Naive thymus-derived CD8-positive, alpha-beta T cell (primary cell): ENCODE measurements at regions of chr1 and their contacts with region 1.

Region 1: GRCh38 chr1:209769171-209769904 is 13.5 kb downstream of the TRAF3IP3 start:
- DNase-seq: peak; percentile 31 to 88 (median 74)
- ATAC-seq: peak; percentile 68 to 78
- H3K4me3 Mint-ChIP-seq: no peak overlapping the region
- H3K27ac Mint-ChIP-seq: no peak overlapping the region
- H3K4me1 Mint-ChIP-seq: peaks cover 22 to 44% (median 36%) of the 10 kb centered on the region in 4 donors
- H3K27me3 Mint-ChIP-seq: no peaks in the 10 kb centered on the region

Region 2: DNA sequence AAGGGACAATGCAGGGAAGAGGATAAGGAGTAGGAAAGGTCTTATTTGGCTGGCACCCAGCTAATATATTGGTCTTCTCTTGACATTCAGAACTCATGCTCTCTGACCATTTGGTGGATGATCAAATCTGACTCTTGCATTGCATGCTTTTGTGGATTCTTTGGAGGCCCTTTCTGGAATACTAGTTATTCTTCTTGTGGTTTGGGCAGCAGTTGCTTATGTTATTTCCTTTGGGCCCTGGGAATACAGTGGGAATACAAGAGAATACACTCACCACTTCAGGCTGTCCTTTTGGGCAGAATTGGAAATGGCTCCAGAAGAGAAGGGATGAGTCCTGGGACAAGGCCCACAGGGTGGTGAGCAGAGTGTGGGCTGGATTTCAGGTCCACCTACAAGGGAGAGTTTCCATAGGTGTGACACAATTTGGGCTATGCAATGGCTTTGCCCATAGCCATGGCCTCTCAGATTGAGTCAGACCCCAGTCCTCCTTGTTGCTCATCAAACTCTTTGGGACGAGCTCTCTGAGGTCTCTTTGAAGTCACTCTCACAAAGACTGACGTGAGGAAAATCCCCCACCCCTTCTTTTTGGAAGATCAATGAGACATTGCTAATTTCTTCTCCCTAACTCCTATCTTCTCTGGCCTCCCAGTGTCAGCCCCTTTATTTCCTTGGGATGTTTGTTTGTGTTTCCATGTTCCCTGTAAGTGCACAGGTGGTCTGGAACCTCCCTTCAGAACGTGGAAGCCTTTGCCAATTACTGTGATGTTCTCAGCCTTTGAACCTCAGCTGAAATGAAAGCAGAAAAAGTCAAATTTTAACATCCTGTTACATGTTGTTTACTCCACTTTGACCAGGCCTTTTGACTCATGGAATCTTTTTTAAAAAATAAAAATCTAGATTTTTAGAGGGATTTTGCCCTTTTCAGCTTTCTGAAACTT is 45.3 kb before region 1 on chr1:
- POLR2A ChIA-PET with region 1: interaction called, 14 read pairs
- DNase-seq: peak in 2 of 10 donors; percentile 13 to 15
- ATAC-seq: peak; percentile 59 to 61
- H3K4me3 Mint-ChIP-seq: peak overlapping the region in 7 of 10 donors; percentile 20 to 83 (median 59)
- H3K27ac Mint-ChIP-seq: peak overlapping the region; percentile 16 to 95 (median 91)
- H3K4me1 Mint-ChIP-seq: peaks cover 19 to 28% (median 24%) of the 10 kb centered on the region in 4 donors
- H3K27me3 Mint-ChIP-seq: no peaks in the 10 kb centered on the region

Region 3: DNA sequence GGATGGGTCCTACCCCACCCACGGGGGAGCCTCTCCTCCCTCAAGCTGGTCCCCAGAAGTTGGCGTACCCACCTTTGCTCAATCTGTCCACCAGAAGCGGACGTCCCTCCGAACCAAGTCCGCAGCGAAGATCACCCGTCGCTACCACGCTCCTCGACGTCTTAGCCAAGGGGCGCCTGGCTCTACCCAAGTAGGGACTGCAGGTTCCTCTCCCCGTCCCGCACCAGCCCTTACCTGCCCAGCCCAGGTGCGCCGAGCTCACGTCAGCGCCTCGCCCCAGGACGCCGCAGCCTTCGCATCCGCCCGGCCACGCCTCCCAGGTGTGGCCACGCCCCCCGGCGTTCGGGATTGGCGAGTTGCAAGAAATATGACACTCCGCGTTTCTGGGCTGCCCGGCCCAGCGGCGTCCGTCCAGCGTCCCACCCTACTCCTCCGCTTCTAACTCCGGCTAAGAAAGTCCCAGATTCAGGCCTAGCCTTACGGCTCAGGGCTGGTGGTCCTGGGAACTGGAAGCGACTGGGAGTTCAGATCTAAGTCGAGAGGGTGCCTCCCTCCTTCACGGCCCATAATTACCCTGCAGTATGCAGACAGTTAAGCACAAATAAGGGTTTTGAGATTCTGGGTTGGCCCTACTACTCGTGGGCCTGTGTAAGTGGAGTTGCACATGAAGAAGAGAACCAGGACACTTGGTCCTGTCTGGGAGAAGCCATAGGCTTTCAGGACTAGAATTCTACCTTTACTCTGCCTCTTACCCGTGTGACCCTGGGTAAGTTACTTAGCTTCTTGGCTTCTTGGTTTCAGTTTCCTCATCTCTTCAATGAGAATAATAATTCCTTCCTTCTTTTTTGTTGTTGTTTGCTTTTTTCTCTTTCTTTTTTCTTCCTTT is 36.8 kb after region 1 on chr1 and contains the start of gene IRF6:
- POLR2A ChIA-PET with region 1: interaction called, 11 read pairs
- DNase-seq: peak; percentile 56 to 88 (median 74)
- ATAC-seq: peak; percentile 93 to 95
- H3K4me3 Mint-ChIP-seq: peak within 1 kb of the TSS; percentile 87 to 99 (median 93)
- H3K27ac Mint-ChIP-seq: peak within 1 kb of the TSS; percentile 25 to 94 (median 89)
- H3K4me1 Mint-ChIP-seq: peaks cover 6 to 15% (median 12%) of the 10 kb centered on the region in 4 donors
- H3K27me3 Mint-ChIP-seq: peaks cover 0 to 14% (median 8%) of the 10 kb centered on the region in 5 donors
- polyA plus RNA-seq, gene IRF6: 0.49 to 2.1 (median 0.86) TPM

Region 4: DNA sequence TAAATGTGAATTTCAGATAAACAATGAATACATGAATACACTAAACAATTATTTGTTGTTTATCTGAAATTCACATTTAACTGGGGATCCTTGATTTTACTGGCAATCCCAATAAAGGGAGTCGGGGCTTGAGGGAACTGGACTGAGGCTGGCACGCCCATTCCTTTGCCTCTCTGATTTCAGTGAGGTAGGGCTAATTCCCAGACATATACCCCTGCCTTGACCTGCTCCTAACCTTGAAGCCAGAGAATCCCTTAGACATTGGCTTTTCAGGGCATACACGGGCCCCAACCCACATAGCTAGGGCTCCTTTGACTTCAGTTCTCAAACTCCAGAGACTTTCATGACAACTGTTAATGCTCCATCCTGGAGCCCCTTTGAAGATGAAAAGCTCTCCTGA is 47.6 kb after region 1 on chr1:
- POLR2A ChIA-PET with region 1: no interaction called
- DNase-seq: no peak
- ATAC-seq: no peak
- H3K4me3 Mint-ChIP-seq: no peak overlapping the region
- H3K27ac Mint-ChIP-seq: no peak overlapping the region
- H3K4me1 Mint-ChIP-seq: peaks cover 0 to 2% (median 0%) of the 10 kb centered on the region in 4 donors
- H3K27me3 Mint-ChIP-seq: peaks cover 3 to 30% (median 16%) of the 10 kb centered on the region in 5 donors